Psoas muscle (tissue), 8 donors: ENCODE measurements at regions of chr13 and their contacts with region 1.

Region 1: DNA sequence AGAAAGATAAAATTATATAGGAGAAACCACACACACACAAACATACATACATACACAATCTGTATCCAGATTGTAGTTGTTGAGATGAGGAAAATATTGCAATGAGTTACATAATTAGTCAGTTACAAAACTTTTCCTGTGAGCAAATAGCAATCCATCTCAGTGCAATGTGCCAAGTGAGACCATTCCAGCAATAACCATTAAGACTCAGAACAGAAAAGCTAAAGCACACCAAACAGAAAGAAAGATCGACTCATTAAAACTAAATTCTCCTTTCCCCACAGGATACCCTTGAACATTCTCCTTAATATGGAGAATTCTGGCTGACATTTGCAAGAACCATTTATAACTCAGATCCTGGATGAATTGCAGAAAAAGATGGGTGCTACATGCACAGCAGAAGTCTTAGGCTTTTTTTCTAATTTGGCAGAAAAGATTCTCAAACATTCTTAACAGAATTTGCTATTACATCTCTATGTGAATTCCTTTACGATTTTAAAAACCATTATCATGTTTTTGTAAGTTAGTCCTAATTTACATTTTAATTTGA is 1341.2 kb upstream of the SPRY2 start:
- DNase-seq: no peak
- ATAC-seq: no peak
- H3K4me3 ChIP-seq: no peak overlapping the region
- H3K27ac ChIP-seq: no peak overlapping the region
- H3K4me1 ChIP-seq: no peaks in the 10 kb centered on the region
- H3K27me3 ChIP-seq: no peaks in the 10 kb centered on the region
- CTCF ChIP-seq: no peak

Region 2: GRCh38 chr13:81602241-81602640 is 79.9 kb before region 1 on chr13:
- intact Hi-C with region 1: no loop called
- DNase-seq: no peak
- ATAC-seq: no peak
- H3K4me3 ChIP-seq: no peak overlapping the region
- H3K27ac ChIP-seq: no peak overlapping the region
- H3K4me1 ChIP-seq: no peaks in the 10 kb centered on the region
- H3K27me3 ChIP-seq: no peaks in the 10 kb centered on the region
- CTCF ChIP-seq: no peak

Region 3: DNA sequence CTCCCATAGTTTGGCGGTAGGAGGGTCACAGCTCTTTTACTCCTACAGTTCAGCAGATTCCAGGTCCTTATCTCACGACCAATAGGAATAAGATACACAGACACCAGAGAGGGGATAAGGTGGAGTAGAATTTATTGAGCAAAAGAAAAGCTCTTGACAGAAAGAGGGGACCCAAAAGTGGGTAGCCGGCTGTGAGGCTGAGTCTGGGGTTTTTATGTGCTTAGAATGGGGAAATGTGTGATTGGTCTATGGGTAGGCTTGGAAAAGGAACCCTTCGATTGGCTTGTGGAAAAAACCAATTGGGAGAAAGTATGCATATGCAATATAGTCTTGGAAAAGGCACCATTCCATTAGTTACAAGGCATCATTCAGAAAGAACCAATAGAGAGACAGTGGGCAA is 15.7 kb after region 1 on chr13:
- intact Hi-C with region 1: loop called in 1 of 2 experiments (anchors 2 kb)
- DNase-seq: no peak
- ATAC-seq: no peak
- H3K4me3 ChIP-seq: no peak overlapping the region
- H3K27ac ChIP-seq: no peak overlapping the region
- H3K4me1 ChIP-seq: no peaks in the 10 kb centered on the region
- H3K27me3 ChIP-seq: no peaks in the 10 kb centered on the region
- CTCF ChIP-seq: no peak